ENCODE measurements at regions of chr2 and their contacts with region 1.

Region 1: DNA sequence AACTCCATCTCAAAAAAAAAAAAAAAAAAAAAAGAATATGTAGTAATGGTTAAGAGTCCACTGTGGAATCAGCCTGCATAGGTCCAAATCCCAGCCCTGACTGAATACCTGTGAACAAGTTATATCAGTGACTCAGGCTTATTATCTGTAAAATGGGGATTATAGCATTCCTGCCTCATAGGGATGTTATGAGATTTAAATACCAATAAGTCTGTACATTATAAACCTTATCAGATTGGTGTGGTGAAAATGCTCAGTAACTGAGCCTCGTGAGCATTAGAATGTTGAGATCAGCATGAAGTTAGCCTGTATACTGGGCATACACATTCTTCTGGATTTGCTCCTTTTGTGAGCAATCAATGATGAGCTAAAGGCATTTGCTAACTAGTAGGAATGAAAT is 3.0 kb upstream of the AMMECR1L start:
- DNase-seq: no peak
- H3K4me3 Mint-ChIP-seq: no peak overlapping the region
- H3K27ac Mint-ChIP-seq: no peak overlapping the region
- H3K4me1 Mint-ChIP-seq: peaks cover 20% of the 10 kb centered on the region
- H3K27me3 Mint-ChIP-seq: no peaks in the 10 kb centered on the region
- CTCF ChIP-seq: no peak

Region 2: DNA sequence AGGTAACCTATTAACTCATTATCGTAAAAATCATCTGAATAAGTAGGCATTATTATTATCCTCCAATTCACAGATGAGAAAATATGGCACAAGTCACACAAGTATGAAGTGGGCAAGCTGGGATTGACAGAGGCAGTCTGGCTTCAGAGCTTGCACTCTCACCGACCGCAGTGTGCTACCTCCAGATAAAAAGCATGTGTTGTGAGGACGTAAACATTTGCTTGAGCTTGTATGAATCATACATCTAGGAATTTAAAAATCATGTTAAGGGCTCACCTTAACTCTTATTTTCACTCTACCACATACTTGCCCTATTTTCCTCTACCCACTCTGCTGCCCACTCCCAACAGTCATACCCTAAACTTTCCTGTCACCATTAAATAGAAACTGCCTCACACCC is 62.3 kb after region 1 on chr2:
- CTCF ChIA-PET with region 1: interaction called, 10 read pairs
- intact Hi-C with region 1: no loop called
- DNase-seq: no peak
- H3K4me3 Mint-ChIP-seq: no peak overlapping the region
- H3K27ac Mint-ChIP-seq: no peak overlapping the region
- H3K4me1 Mint-ChIP-seq: no peaks in the 10 kb centered on the region
- H3K27me3 Mint-ChIP-seq: no peaks in the 10 kb centered on the region
- CTCF ChIP-seq: no peak

Measured in Calu3 (cell line).